Right lobe of liver (tissue), 6 donors: ENCODE measurements at regions of chr1 and their contacts with region 1.

Region 1: GRCh38 chr1:37676281-37677243 is 15.8 kb upstream of the CDCA8 start:
- DNase-seq: no peak
- ATAC-seq: no peak
- H3K4me3 ChIP-seq: no peak overlapping the region
- H3K27ac ChIP-seq: no peak overlapping the region
- H3K4me1 ChIP-seq: no peaks in the 10 kb centered on the region
- H3K27me3 ChIP-seq: no peaks in the 10 kb centered on the region
- CTCF ChIP-seq: no peak
- POLR2A ChIP-seq: no peak

Region 2: GRCh38 chr1:37486680-37487618 is 189.6 kb before region 1 on chr1:
- intact Hi-C with region 1: loop called in 1 of 2 experiments (anchors 10 kb)
- DNase-seq: peak; percentile 74 to 81 (median 77)
- ATAC-seq: peak; percentile 77 to 92 (median 88)
- H3K4me3 ChIP-seq: no peak overlapping the region
- H3K27ac ChIP-seq: peak overlapping the region in 2 of 3 donors; percentile 20 to 47
- H3K4me1 ChIP-seq: peaks cover 0 to 30% (median 0%) of the 10 kb centered on the region in 4 donors
- H3K27me3 ChIP-seq: no peaks in the 10 kb centered on the region
- CTCF ChIP-seq: peak; percentile 97 to 99 (median 99)
- POLR2A ChIP-seq: no peak

Region 3: DNA sequence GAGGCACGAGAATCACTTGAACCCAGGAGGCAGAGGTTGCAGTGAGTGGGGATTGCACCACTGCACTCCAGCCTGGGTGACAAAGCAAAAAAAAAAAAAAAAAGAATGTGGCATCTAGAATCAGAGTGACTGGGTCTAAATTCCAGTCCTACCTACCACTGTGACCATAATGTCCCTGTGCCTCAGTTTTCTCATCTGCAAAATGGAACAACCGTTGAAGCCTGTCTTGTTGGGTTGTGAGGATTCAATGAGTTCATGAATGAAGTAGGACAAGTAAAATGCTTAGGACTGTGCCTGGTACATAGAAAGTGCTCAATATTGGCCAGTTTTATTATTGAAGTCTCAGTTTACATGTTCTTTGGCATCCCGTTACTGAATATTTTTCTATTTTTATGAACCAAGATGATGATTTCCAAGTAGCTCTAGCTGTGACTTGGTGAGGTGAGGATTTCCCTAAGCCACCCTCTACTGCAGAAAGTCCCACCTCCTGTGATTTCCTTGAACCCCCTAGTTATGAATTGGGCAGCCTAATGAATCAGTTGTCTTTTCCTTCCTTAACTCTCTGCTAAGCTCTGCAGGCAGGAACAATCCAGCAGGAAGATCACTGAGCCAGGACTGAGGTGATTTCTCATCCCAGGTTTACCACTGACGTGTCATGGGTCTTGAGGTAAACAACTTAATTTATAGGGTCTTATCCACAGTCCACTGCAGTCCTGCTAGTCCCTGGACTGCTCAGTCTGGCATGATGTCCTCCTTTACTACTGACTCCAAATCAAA is 143.1 kb before region 1 on chr1:
- intact Hi-C with region 1: no loop called
- DNase-seq: peak in 1 of 3 donors; percentile 12
- ATAC-seq: no peak
- H3K4me3 ChIP-seq: no peak overlapping the region
- H3K27ac ChIP-seq: peak overlapping the region; percentile 70 to 97 (median 93)
- H3K4me1 ChIP-seq: peaks cover 0 to 54% (median 11%) of the 10 kb centered on the region in 4 donors
- H3K27me3 ChIP-seq: no peaks in the 10 kb centered on the region
- CTCF ChIP-seq: no peak
- POLR2A ChIP-seq: no peak

Region 4: DNA sequence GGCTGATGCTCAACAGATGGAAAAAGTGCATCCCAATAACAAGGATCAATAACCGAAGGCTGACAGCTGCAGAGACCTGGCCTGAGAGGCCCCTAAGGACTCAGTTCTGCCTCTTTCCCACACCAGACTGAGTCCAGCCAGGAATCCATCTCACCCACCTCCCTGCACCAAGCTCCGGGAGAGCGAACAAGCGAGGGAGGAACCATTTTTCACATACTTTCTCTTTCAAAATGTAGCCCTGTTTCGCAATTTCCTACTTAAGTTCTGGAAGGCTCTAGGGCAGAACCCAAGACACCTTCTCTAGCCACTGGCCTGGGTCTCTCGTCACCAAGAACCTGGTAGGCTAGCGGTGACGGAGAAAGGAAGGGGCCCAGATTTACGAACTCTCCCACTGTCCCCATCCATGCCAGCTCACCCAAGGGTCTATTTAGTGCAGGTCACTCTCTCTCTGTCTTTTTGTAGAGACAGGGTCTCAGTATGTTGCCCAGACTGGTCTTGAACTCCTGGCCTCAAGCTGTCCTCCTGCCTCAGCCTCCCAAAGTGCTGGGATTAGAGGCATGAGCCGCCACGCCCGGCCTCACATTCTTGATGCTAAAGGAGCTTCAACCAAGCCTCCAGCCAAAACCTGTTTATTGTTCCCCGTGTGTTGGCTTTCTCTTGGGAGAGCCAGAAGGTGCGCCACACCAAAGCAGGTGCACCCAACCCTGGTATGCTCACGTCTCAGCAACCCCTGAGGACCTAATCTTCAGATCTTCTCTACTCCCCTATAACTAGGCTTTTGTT is 69.9 kb before region 1 on chr1:
- intact Hi-C with region 1: loop called (anchors 5 kb)
- DNase-seq: no peak
- ATAC-seq: peak in 1 of 4 donors; percentile 56
- H3K4me3 ChIP-seq: no peak overlapping the region
- H3K27ac ChIP-seq: no peak overlapping the region
- H3K4me1 ChIP-seq: no peaks in the 10 kb centered on the region
- H3K27me3 ChIP-seq: no peaks in the 10 kb centered on the region
- CTCF ChIP-seq: no peak
- POLR2A ChIP-seq: no peak

Region 5: GRCh38 chr1:37612200-37612599 is 64.4 kb before region 1 on chr1:
- intact Hi-C with region 1: loop called (anchors 5 kb)
- DNase-seq: no peak
- ATAC-seq: no peak
- H3K4me3 ChIP-seq: no peak overlapping the region
- H3K27ac ChIP-seq: no peak overlapping the region
- H3K4me1 ChIP-seq: no peaks in the 10 kb centered on the region
- H3K27me3 ChIP-seq: no peaks in the 10 kb centered on the region
- CTCF ChIP-seq: no peak
- POLR2A ChIP-seq: no peak